Left ventricle myocardium superior (tissue), 1 donor: ENCODE measurements at regions of chr22 and their contacts with region 1.

Region 1: GRCh38 chr22:30386960-30387827 is at the start of gene RNF215:
- DNase-seq: peak; percentile 91
- ATAC-seq: peak; percentile 96
- total RNA-seq, gene RNF215: 5.4 TPM

Region 2: GRCh38 chr22:30485362-30485988 is 98.3 kb after region 1 on chr22:
- intact Hi-C with region 1: loop called (anchors 10 kb)
- DNase-seq: peak; percentile 66
- ATAC-seq: peak; percentile 93